WTC11 (cell line): ENCODE measurements at regions of chr15 and their contacts with region 1.

Region 1: GRCh38 chr15:79596051-79596507 is 163.9 kb downstream of the MINAR1 start:
- DNase-seq: peak; percentile 72
- ATAC-seq: peak; percentile 98
- H3K4me3 Mint-ChIP-seq: no peak overlapping the region
- H3K27ac Mint-ChIP-seq: no peak overlapping the region
- H3K4me1 Mint-ChIP-seq: no peaks in the 10 kb centered on the region
- H3K27me3 Mint-ChIP-seq: no peaks in the 10 kb centered on the region; the same call in 1 of the 2 replicates
- CTCF ChIP-seq: peak; percentile 89

Region 2: GRCh38 chr15:79364571-79365240 is 231.4 kb before region 1 on chr15:
- CTCF ChIA-PET with region 1: interaction called, 12 read pairs
- POLR2A ChIA-PET with region 1: no interaction called
- DNase-seq: no peak
- ATAC-seq: no peak
- H3K4me3 Mint-ChIP-seq: no peak overlapping the region
- H3K27ac Mint-ChIP-seq: no peak overlapping the region
- H3K4me1 Mint-ChIP-seq: peaks cover 30% of the 10 kb centered on the region
- H3K27me3 Mint-ChIP-seq: no peaks in the 10 kb centered on the region
- CTCF ChIP-seq: no peak

Region 3: GRCh38 chr15:79431636-79432344 is 164.3 kb before region 1 on chr15 and contains the start of gene MINAR1:
- CTCF ChIA-PET with region 1: interaction called, 72 read pairs
- POLR2A ChIA-PET with region 1: no interaction called
- DNase-seq: peak; percentile 47
- ATAC-seq: peak; percentile 56
- H3K4me3 Mint-ChIP-seq: peak within 1 kb of the TSS; percentile 82
- H3K27ac Mint-ChIP-seq: no peak within 1 kb of the TSS
- H3K4me1 Mint-ChIP-seq: peaks cover 45% of the 10 kb centered on the region
- H3K27me3 Mint-ChIP-seq: peaks cover 77% of the 10 kb centered on the region
- CTCF ChIP-seq: no peak
- total RNA-seq, gene MINAR1: 0.78 to 1.4 TPM (median 0.80 TPM) in 3 replicates

Region 4: DNA sequence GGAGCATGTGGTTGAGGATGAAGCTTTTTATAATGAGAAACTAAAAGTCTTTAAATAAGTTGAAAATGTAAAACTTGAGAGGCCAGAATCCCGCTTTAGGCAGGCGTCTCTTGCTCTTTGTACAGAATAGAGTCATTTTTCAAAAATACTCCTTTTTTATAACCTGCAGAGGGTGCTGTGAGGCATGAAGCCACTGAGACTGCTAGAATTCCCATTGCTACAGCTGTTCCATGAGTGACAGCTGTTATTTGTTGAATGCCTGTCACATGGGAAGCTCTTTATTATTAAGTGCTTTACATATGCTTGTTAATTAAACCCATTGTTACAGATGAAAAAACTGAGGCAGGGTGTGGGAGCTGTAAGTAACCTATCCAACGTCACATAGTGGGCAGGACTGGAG is 145.4 kb before region 1 on chr15:
- CTCF ChIA-PET with region 1: interaction called, 59 read pairs
- POLR2A ChIA-PET with region 1: no interaction called
- DNase-seq: no peak
- ATAC-seq: 0 out of 2 replicates have a peak, but pooled peaks have one; percentile 22
- H3K4me3 Mint-ChIP-seq: no peak overlapping the region
- H3K27ac Mint-ChIP-seq: no peak overlapping the region
- H3K4me1 Mint-ChIP-seq: no peaks in the 10 kb centered on the region
- H3K27me3 Mint-ChIP-seq: no peaks in the 10 kb centered on the region
- CTCF ChIP-seq: no peak

Region 5: DNA sequence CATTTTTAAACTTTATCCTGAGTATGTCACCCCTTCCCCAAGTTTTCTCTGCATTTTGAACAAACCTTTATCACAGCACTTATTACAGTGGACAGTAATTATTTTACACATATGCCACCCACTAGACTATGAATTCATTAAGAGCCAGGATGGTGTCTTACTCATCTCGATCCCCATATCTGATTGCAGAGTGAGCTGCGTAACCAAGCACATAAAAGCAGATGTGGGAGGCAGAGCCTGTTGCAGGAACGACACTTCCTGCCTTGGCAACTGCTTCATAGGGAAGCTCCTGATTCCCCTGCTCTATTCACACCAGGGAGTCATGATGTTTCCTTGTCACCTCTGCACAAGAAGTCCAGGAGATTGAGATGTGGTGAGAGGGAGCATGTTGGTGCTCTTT is 72.8 kb before region 1 on chr15:
- CTCF ChIA-PET with region 1: no interaction called
- POLR2A ChIA-PET with region 1: no interaction called
- DNase-seq: no peak
- ATAC-seq: no peak
- H3K4me3 Mint-ChIP-seq: no peak overlapping the region
- H3K27ac Mint-ChIP-seq: no peak overlapping the region
- H3K4me1 Mint-ChIP-seq: peaks cover 6% of the 10 kb centered on the region
- H3K27me3 Mint-ChIP-seq: no peaks in the 10 kb centered on the region
- CTCF ChIP-seq: no peak

Region 6: DNA sequence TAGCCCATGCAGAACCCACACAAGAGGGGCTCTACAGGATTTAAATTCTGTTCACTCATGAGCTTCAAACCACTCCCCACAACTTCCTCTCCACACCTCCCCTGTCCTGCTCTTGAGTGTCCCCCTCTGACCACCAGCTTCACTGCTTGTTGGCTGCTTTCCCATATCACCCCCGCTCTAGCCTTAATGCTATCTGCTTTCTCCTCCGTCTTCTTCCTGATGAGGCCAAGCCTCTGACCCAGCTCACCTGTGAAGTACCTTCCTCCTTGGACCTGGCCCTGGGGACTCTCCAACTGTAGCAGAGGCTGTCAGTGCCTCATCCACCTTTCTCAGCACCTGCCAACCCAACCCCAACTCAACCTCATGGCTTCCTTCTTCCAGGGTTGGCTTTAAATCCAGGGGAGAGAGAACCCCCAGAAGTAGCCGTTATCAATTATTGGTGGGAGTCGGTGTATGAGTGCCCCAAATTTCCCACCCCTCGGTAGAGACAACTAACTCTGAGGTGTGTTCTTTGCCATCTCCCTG is 10.8 kb after region 1 on chr15:
- CTCF ChIA-PET with region 1: interaction called, 13 read pairs
- POLR2A ChIA-PET with region 1: no interaction called
- DNase-seq: no peak
- ATAC-seq: no peak
- H3K4me3 Mint-ChIP-seq: no peak overlapping the region
- H3K27ac Mint-ChIP-seq: no peak overlapping the region
- H3K4me1 Mint-ChIP-seq: no peaks in the 10 kb centered on the region
- H3K27me3 Mint-ChIP-seq: no peaks in the 10 kb centered on the region
- CTCF ChIP-seq: no peak

Region 7: DNA sequence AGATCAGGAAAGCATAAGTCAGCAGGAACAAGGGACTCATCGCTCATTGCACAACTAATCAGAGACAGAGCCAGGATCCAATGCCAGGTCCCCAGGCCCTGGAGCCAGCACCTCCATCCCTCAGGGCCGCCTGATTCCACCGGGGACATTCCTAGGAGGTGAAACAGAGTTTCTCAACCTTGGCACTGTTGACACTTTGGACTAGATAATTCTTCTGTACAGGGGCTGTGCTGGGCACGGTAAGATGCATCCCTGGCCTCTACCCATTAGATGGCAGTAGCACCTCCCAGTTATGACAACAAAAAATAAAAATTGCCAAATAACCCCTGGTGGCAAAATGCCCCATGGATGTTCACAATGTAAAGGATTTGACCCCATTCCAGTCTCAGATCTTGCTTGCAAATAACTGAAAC is 173.0 kb after region 1 on chr15:
- CTCF ChIA-PET with region 1: no interaction called
- POLR2A ChIA-PET with region 1: no interaction called
- DNase-seq: no peak
- ATAC-seq: no peak; the same call in 1 of the 2 replicates
- H3K4me3 Mint-ChIP-seq: no peak overlapping the region
- H3K27ac Mint-ChIP-seq: no peak overlapping the region
- H3K4me1 Mint-ChIP-seq: no peaks in the 10 kb centered on the region
- H3K27me3 Mint-ChIP-seq: 0 out of 2 replicates have a peak, but pooled peaks cover 4% of the 10 kb centered on the region
- CTCF ChIP-seq: no peak

Region 8: GRCh38 chr15:79853458-79854328 is 257.6 kb after region 1 on chr15:
- CTCF ChIA-PET with region 1: interaction called, 27 read pairs
- POLR2A ChIA-PET with region 1: no interaction called
- DNase-seq: peak; percentile 72
- ATAC-seq: peak; percentile 98
- H3K4me3 Mint-ChIP-seq: no peak overlapping the region
- H3K27ac Mint-ChIP-seq: peak overlapping the region; percentile 63
- H3K4me1 Mint-ChIP-seq: peaks cover 5% of the 10 kb centered on the region
- H3K27me3 Mint-ChIP-seq: no peaks in the 10 kb centered on the region
- CTCF ChIP-seq: peak; percentile 83